Left colon (tissue), 2 donors: ENCODE measurements at regions of chr1 and their contacts with region 1.

Region 1: DNA sequence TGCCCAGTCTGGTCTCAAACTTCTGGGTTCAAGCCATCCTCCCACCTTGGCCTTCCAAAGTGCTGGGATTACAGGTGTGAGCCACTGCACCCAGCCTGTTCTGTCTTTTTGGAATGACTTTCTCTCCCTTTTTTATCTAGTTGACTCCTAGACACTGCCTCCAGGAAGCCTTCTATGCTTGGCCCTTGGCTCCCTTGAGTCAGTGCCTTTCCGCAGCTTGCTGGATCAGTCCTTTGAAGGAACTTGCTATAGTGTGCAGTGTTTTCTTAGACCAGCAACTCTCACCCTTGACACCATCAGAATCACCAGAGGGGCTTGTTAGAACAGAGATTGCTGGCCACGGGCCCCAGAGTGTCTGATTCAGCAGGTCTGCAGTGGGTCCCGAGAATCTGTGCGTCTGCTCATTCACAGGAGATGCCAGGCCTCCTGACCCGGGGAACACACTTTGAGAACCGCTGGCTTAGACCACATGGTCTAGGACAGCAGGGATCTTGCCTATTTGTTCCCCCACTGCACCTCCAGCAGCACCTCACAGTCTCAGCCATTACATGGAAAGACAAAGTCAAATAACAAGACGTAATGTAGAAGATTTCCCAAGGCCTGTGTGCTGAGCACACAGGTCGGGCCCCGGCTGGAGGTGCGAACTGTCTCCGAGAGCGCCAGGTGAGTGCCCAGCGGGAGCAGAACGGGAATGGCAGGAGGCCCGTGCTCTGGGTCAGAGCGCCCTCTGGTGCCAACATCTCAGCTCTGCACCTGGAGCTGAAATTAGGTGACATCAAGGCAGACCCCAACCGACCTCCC is 27.4 kb upstream of the CTPS1 start:
- DNase-seq: peak; percentile 53 to 73
- ATAC-seq: peak; percentile 94

Region 2: GRCh38 chr1:40625066-40625465 is 327.1 kb before region 1 on chr1:
- intact Hi-C with region 1: loop called in 1 of 2 experiments (anchors 10 kb)
- DNase-seq: peak in 1 of 2 donors; percentile 66
- ATAC-seq: peak; percentile 58

Region 3: DNA sequence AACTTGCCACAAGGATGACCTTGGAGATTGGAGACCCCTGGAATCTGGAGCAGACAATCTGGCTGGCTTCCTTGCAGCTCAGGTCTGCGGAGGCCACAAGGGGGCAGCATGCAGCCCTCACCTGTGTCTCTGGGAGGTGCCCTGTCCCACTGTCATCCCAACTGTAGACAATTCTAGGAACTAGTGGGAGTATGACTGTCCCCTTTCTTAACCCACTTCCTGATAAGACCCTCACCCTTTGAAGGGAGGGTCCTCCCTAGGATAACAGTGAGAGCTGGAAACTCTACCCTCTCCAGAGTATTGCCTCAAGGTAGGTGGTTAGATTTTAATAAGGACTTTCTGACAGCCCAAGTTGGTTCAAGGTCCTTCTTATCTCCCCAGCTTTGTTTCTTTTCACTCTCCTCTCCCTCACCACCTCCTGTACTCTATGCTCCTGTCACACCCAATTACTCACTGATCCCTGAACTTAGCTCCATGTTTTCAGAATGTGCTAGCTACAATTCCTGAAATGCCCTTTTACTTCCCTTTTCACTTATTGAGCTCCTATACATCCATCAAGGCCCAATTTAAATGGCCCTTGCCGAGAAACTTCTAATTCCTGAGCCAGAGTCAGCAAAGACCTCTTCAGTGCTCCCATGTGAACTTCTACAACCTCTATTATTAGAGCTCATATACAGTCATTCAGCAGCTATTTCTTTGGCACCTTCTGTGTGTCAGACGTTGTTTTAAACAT is 177.7 kb before region 1 on chr1:
- intact Hi-C with region 1: loop called in 1 of 2 experiments (anchors 10 kb)
- DNase-seq: peak; percentile 44 to 81
- ATAC-seq: peak; percentile 79

Region 4: DNA sequence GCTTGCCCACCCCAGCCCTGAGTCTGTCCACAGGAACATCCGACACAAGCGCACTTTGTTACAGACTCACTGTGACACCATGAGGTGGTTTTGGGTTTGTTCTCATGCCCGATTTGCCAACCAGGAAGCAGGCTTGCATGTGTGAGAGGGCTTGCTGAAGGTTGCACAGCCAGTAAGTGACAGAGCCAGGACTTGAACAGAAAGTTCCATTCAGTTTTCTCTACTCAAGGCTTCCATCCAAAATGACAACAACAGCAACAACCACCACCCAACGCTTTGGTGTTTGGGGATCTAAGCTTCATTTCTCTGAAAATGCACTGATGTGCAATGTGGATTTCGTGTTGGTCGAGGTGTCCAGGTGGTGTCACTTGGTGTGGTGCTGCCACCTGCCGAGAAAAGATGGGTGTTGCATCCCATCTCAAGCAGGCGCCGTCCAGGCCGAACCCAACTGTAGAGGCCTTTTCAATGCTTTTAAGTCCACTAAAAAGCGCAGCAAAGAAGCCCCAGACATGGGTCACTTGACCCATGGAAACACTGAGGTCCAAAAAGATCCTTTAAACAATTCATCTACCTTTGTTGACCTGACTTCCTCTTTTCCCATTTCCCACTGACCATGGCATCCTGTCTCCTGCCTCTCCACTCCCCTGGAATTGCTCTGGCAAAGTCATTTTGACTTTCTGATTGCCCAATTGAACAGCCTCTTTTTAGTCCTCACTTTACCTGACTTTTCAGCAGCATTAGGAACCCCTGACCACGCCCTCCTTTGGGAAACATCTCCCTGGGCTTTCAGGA is 102.1 kb before region 1 on chr1:
- intact Hi-C with region 1: loop called (anchors 2 to 5 kb)
- DNase-seq: peak in 1 of 2 donors; percentile 72
- ATAC-seq: peak; percentile 83

Region 5: GRCh38 chr1:40868051-40868794 is 83.9 kb before region 1 on chr1:
- intact Hi-C with region 1: loop called in 1 of 2 experiments (anchors 5 kb)
- DNase-seq: no peak
- ATAC-seq: peak; percentile 98

Region 6: DNA sequence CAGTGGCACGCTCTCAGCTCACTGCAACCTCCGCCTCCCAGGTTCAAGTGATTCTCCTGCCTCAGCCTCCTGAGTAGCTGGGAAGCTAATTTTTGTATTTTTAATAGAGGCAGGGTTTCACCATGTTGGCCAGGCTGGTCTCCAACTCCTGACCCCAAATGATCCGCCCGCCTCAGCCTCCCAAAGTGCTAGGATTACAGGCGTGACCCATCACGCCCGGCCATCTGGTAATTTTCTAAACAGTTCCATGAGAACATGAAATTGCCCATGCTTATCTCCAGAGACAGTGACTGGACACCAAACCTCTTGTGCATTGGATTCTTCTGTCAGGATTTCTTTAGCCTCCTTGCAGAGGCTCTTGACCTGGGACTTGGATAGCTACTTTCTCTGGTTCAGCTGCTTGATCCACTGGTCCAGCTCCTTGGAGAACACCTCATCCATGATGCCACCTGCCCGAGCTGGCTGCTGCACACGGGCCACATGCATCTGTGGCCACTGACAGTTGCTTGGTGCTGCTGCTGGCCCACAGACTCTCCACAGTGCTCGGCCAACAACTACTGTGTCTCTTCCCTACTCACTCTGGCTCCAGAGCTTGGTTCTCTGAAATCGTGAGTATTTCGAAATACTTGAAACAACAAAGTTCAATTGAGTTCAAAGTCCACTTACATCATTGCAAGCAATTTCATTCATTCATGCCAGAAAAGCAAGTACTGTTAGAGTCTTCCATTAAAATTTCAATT is 12.7 kb before region 1 on chr1:
- intact Hi-C with region 1: no loop called
- DNase-seq: peak in 1 of 2 donors; percentile 12
- ATAC-seq: peak; percentile 89

Region 7: GRCh38 chr1:41516168-41517061 is 564.3 kb after region 1 on chr1:
- intact Hi-C with region 1: no loop called
- DNase-seq: peak; percentile 85 to 91
- ATAC-seq: peak; percentile 83